Adrenal gland (tissue), 19 donors: ENCODE measurements at regions of chr6 and their contacts with region 1.

Region 1: GRCh38 chr6:112081569-112081968 is 5.7 kb downstream of the TUBE1 start:
- DNase-seq: no peak
- H3K4me3 ChIP-seq: no peak overlapping the region
- H3K27ac ChIP-seq: no peak overlapping the region
- H3K4me1 ChIP-seq: peaks cover 3 to 17% of the 10 kb centered on the region in 2 donors
- H3K27me3 ChIP-seq: no peaks in the 10 kb centered on the region
- CTCF ChIP-seq: no peak
- POLR2A ChIP-seq: no peak

Region 2: GRCh38 chr6:111939902-111940301 is 141.7 kb before region 1 on chr6:
- intact Hi-C with region 1: no loop called
- DNase-seq: peak in 1 of 7 donors; percentile 7
- H3K4me3 ChIP-seq: no peak overlapping the region
- H3K27ac ChIP-seq: no peak overlapping the region
- H3K4me1 ChIP-seq: no peaks in the 10 kb centered on the region
- H3K27me3 ChIP-seq: no peaks in the 10 kb centered on the region
- CTCF ChIP-seq: no peak
- POLR2A ChIP-seq: no peak

Region 3: GRCh38 chr6:112163295-112164257 is 82.0 kb after region 1 on chr6:
- intact Hi-C with region 1: loop called in 1 of 2 experiments (anchors 5 kb)
- DNase-seq: peak; percentile 64 to 88 (median 75)
- H3K4me3 ChIP-seq: no peak overlapping the region
- H3K27ac ChIP-seq: no peak overlapping the region
- H3K4me1 ChIP-seq: no peaks in the 10 kb centered on the region
- H3K27me3 ChIP-seq: no peaks in the 10 kb centered on the region
- CTCF ChIP-seq: peak; percentile 68 to 85 (median 80)
- POLR2A ChIP-seq: no peak